CD8-positive, alpha-beta T cell (primary cell): ENCODE measurements at regions of chr17 and their contacts with region 1.

Region 1: DNA sequence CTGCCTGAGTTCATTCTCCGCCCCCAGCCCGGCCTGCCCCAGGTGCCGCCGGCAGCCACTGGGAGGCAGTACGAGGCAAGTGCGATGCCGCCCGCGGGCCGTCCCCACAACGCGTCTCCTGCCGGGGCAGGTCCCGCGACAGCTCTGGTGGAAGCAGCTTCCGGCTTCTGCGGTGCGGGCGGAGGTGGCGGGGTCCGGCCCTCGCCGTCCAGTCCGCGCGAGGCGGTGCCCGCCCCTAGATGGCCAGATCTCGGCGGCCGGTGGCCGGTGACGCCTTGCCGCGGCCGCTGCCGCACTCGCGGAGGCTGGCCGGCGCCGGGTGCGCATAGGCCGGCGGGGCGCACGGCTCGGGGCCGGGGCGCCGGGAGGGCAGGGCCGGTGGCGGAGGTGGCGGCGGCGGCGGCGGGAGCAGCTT is 1.8 kb downstream of the GJD3 start:
- DNase-seq: peak; percentile 55 to 82 (median 77)
- ATAC-seq: peak; percentile 79
- H3K4me3 ChIP-seq: peak overlapping the region in 1 of 2 experiments; percentile 20
- H3K4me3 Mint-ChIP-seq: peak overlapping the region; percentile 78
- H3K27ac ChIP-seq: no peak overlapping the region
- H3K27ac Mint-ChIP-seq: no peak overlapping the region
- H3K4me1 ChIP-seq: peaks cover 15% of the 10 kb centered on the region
- H3K4me1 Mint-ChIP-seq: peaks cover 10% of the 10 kb centered on the region
- H3K27me3 ChIP-seq: peaks cover 0 to 6% of the 10 kb centered on the region in 2 experiments
- H3K27me3 Mint-ChIP-seq: peaks cover 6% of the 10 kb centered on the region
- CTCF ChIP-seq: peak; percentile 62

Region 2: GRCh38 chr17:40264458-40265185 is 98.1 kb before region 1 on chr17:
- CTCF ChIA-PET with region 1: no interaction called
- POLR2A ChIA-PET with region 1: no interaction called
- intact Hi-C with region 1: no loop called
- DNase-seq: no peak
- ATAC-seq: no peak
- H3K4me3 ChIP-seq: no peak overlapping the region
- H3K4me3 Mint-ChIP-seq: no peak overlapping the region
- H3K27ac ChIP-seq: no peak overlapping the region
- H3K27ac Mint-ChIP-seq: no peak overlapping the region
- H3K4me1 ChIP-seq: no peaks in the 10 kb centered on the region
- H3K4me1 Mint-ChIP-seq: no peaks in the 10 kb centered on the region
- H3K27me3 ChIP-seq: no peaks in the 10 kb centered on the region
- H3K27me3 Mint-ChIP-seq: no peaks in the 10 kb centered on the region
- CTCF ChIP-seq: no peak

Region 3: DNA sequence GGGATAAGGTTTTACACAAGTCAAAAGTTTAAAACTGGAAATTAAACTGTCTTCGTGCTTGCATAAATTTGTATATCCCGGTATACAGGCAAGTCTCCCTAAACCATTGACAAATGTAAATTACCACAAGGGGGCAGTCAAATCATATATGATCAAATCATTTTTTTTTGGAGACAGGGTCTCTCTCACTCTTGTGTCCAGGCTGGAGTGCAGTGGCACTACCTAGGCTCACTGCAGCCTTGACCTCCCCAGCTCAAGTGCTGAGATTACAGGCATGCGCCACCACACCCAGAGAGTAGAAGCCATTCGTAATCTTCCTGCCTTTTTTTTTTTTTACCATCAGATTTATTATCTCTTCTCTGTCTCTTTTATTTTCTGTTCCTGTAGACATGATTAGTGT is 36.5 kb after region 1 on chr17:
- CTCF ChIA-PET with region 1: interaction called, 6 read pairs
- POLR2A ChIA-PET with region 1: no interaction called
- intact Hi-C with region 1: loop called in 1 of 2 experiments (anchors 5 kb)
- DNase-seq: peak in 2 of 9 experiments; percentile 71 to 78
- ATAC-seq: peak; percentile 55
- H3K4me3 ChIP-seq: no peak overlapping the region
- H3K4me3 Mint-ChIP-seq: no peak overlapping the region
- H3K27ac ChIP-seq: no peak overlapping the region
- H3K27ac Mint-ChIP-seq: no peak overlapping the region
- H3K4me1 ChIP-seq: no peaks in the 10 kb centered on the region
- H3K4me1 Mint-ChIP-seq: peaks cover 16% of the 10 kb centered on the region
- H3K27me3 ChIP-seq: no peaks in the 10 kb centered on the region
- H3K27me3 Mint-ChIP-seq: no peaks in the 10 kb centered on the region
- CTCF ChIP-seq: peak; percentile 74

Region 4: GRCh38 chr17:40432864-40433528 is 70.3 kb after region 1 on chr17:
- CTCF ChIA-PET with region 1: no interaction called
- POLR2A ChIA-PET with region 1: no interaction called
- intact Hi-C with region 1: no loop called
- DNase-seq: no peak
- ATAC-seq: no peak
- H3K4me3 ChIP-seq: no peak overlapping the region
- H3K4me3 Mint-ChIP-seq: no peak overlapping the region
- H3K27ac ChIP-seq: no peak overlapping the region
- H3K27ac Mint-ChIP-seq: no peak overlapping the region
- H3K4me1 ChIP-seq: peaks cover under 1% of the 10 kb centered on the region
- H3K4me1 Mint-ChIP-seq: peaks cover 4% of the 10 kb centered on the region
- H3K27me3 ChIP-seq: no peaks in the 10 kb centered on the region
- H3K27me3 Mint-ChIP-seq: no peaks in the 10 kb centered on the region
- CTCF ChIP-seq: no peak

Region 5: DNA sequence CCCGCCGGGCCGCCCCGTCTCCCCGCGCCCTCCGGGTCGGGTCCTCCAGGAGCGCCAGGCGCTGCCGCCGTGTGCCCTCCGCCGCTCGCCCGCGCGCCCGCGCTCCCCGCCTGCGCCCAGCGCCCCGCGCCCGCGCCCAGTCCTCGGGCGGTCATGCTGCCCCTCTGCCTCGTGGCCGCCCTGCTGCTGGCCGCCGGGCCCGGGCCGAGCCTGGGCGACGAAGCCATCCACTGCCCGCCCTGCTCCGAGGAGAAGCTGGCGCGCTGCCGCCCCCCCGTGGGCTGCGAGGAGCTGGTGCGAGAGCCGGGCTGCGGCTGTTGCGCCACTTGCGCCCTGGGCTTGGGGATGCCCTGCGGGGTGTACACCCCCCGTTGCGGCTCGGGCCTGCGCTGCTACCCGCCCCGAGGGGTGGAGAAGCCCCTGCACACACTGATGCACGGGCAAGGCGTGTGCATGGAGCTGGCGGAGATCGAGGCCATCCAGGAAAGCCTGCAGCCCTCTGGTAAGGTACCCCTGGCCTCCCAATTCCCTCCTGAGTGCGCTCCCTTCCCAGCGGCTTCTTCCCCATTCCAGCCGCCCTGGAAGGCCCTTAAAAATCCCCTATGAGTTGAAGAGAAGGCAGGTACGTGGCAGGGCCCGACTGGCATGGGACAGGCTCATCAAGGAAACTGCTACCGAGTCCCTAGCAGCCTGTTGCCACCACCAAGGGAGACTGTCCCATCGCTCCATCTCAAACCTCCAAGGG is 81.1 kb after region 1 on chr17:
- CTCF ChIA-PET with region 1: interaction called, 4 read pairs
- POLR2A ChIA-PET with region 1: no interaction called
- intact Hi-C with region 1: loop called in 1 of 2 experiments (anchors 2 kb)
- DNase-seq: peak; percentile 34 to 83 (median 67)
- ATAC-seq: peak; percentile 76
- H3K4me3 ChIP-seq: peak overlapping the region; percentile 42 to 49
- H3K4me3 Mint-ChIP-seq: peak overlapping the region; percentile 85
- H3K27ac ChIP-seq: no peak overlapping the region
- H3K27ac Mint-ChIP-seq: peak overlapping the region; percentile 66
- H3K4me1 ChIP-seq: peaks cover 22% of the 10 kb centered on the region
- H3K4me1 Mint-ChIP-seq: peaks cover 29% of the 10 kb centered on the region
- H3K27me3 ChIP-seq: no peaks in the 10 kb centered on the region
- H3K27me3 Mint-ChIP-seq: peaks cover 3% of the 10 kb centered on the region
- CTCF ChIP-seq: peak; percentile 30

Region 6: GRCh38 chr17:40511667-40512221 is 149.0 kb after region 1 on chr17:
- CTCF ChIA-PET with region 1: no interaction called
- POLR2A ChIA-PET with region 1: no interaction called
- intact Hi-C with region 1: no loop called
- DNase-seq: no peak
- ATAC-seq: no peak
- H3K4me3 ChIP-seq: no peak overlapping the region
- H3K4me3 Mint-ChIP-seq: no peak overlapping the region
- H3K27ac ChIP-seq: no peak overlapping the region
- H3K27ac Mint-ChIP-seq: no peak overlapping the region
- H3K4me1 ChIP-seq: peaks cover 24% of the 10 kb centered on the region
- H3K4me1 Mint-ChIP-seq: peaks cover 35% of the 10 kb centered on the region
- H3K27me3 ChIP-seq: no peaks in the 10 kb centered on the region
- H3K27me3 Mint-ChIP-seq: peaks cover 4% of the 10 kb centered on the region
- CTCF ChIP-seq: no peak

Region 7: GRCh38 chr17:40615295-40615988 is 252.7 kb after region 1 on chr17:
- CTCF ChIA-PET with region 1: interaction called, 3 read pairs
- POLR2A ChIA-PET with region 1: no interaction called
- intact Hi-C with region 1: loop called (anchors 2 to 5 kb)
- DNase-seq: peak in 7 of 9 experiments; percentile 45 to 88 (median 71)
- ATAC-seq: peak; percentile 45
- H3K4me3 ChIP-seq: peak overlapping the region in 1 of 2 experiments; percentile 7
- H3K4me3 Mint-ChIP-seq: peak overlapping the region; percentile 44
- H3K27ac ChIP-seq: peak overlapping the region; percentile 62 to 92
- H3K27ac Mint-ChIP-seq: peak overlapping the region; percentile 97
- H3K4me1 ChIP-seq: peaks cover 76% of the 10 kb centered on the region
- H3K4me1 Mint-ChIP-seq: peaks cover 71% of the 10 kb centered on the region
- H3K27me3 ChIP-seq: no peaks in the 10 kb centered on the region
- H3K27me3 Mint-ChIP-seq: no peaks in the 10 kb centered on the region
- CTCF ChIP-seq: no peak

Region 8: DNA sequence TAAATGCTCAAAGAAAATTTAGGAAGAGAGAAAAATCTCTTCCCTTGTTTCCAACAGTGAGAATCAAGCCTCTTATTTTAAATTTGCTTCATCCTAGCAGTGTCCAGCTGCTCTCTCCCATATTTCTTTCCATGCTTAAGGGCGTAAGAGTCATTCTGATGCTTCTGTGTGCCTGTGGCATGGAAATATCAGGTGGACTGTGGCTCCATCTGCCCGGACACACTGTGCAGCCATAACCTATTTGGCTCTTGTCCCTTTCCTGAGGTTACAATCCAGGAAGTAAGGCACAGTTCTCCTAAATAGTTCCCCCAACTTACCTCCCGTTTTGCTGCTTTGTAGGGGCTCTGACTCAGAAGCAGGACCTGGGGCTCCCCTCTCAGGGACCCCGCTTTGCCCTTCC is 308.6 kb after region 1 on chr17:
- CTCF ChIA-PET with region 1: no interaction called
- POLR2A ChIA-PET with region 1: no interaction called
- intact Hi-C with region 1: no loop called
- DNase-seq: no peak
- ATAC-seq: no peak
- H3K4me3 ChIP-seq: no peak overlapping the region
- H3K4me3 Mint-ChIP-seq: no peak overlapping the region
- H3K27ac ChIP-seq: no peak overlapping the region
- H3K27ac Mint-ChIP-seq: no peak overlapping the region
- H3K4me1 ChIP-seq: no peaks in the 10 kb centered on the region
- H3K4me1 Mint-ChIP-seq: no peaks in the 10 kb centered on the region
- H3K27me3 ChIP-seq: peaks cover 0 to 2% of the 10 kb centered on the region in 2 experiments
- H3K27me3 Mint-ChIP-seq: peaks cover 9% of the 10 kb centered on the region
- CTCF ChIP-seq: no peak

Region 9: DNA sequence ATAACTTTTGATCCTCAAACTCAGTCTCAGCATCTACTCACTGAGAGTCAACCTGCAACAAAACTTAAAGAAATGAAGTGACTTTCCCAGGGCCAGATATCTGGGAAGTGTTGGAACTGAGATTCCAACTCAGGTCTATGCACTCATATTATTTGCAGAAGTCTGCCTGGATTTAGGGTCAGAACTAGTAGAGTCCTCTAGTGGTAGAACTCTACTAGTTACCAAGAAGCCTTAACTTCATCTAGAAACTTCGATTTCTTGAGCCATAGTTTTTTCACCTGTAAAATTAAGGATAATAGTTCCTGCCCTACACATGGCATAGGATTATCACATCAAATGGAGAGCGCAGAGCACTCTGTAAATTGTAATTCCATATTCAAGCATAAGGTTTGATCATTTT is 364.2 kb after region 1 on chr17:
- CTCF ChIA-PET with region 1: no interaction called
- POLR2A ChIA-PET with region 1: no interaction called
- intact Hi-C with region 1: loop called (anchors 2 to 5 kb)
- DNase-seq: peak in 2 of 9 experiments; percentile 18 to 46
- ATAC-seq: peak; percentile 29
- H3K4me3 ChIP-seq: no peak overlapping the region
- H3K4me3 Mint-ChIP-seq: no peak overlapping the region
- H3K27ac ChIP-seq: no peak overlapping the region
- H3K27ac Mint-ChIP-seq: no peak overlapping the region
- H3K4me1 ChIP-seq: no peaks in the 10 kb centered on the region
- H3K4me1 Mint-ChIP-seq: no peaks in the 10 kb centered on the region
- H3K27me3 ChIP-seq: peaks cover 0 to 2% of the 10 kb centered on the region in 2 experiments
- H3K27me3 Mint-ChIP-seq: peaks cover 25% of the 10 kb centered on the region
- CTCF ChIP-seq: peak; percentile 56